ENCODE measurements at regions of chr12 and their contacts with region 1.

Region 1: DNA sequence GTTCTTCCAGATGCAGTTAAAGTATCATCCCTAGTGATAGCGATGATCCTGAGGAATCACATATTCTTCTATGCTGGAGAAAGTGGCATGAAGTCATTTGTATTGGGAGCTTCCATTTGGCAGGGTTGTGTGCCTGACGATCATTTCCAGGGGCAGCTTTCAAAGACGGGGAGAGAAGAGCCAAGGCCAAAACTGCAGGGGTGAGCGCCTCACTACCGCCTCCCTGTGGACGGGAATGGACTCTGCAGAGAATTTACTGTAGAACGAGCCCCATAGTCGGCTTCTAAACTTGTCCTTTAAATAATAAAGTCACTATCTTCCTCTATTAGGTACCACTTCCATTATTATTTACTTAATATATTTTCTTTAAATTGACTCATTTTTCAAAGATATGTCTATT is 555.9 kb upstream of the TMEM132C start:
- DNase-seq: no peak
- H3K4me3 ChIP-seq: no peak overlapping the region
- CTCF ChIP-seq: peak; percentile 19

Region 2: GRCh38 chr12:127750076-127750840 is 39.1 kb after region 1 on chr12:
- in situ Hi-C with region 1: no loop called
- DNase-seq: no peak
- H3K4me3 ChIP-seq: no peak overlapping the region
- CTCF ChIP-seq: no peak

Region 3: GRCh38 chr12:127767656-127768055 is 56.5 kb after region 1 on chr12:
- in situ Hi-C with region 1: loop called (anchors 5 kb)
- DNase-seq: no peak
- H3K4me3 ChIP-seq: no peak overlapping the region
- CTCF ChIP-seq: no peak